Dorsolateral prefrontal cortex (tissue), 120 donors: ENCODE measurements at regions of chr1 and their contacts with region 1.

Region 1: GRCh38 chr1:2194898-2195673 is 514 bp upstream of the FAAP20 start:
- DNase-seq: peak; percentile 68 to 87 (median 79)
- H3K4me3 ChIP-seq: peak overlapping the region; percentile 52 to 83 (median 71)
- H3K27ac ChIP-seq: peak overlapping the region; percentile 55 to 99 (median 93)
- H3K27me3 ChIP-seq: no peaks in the 10 kb centered on the region
- CTCF ChIP-seq: peak; percentile 58 to 96 (median 87)

Region 2: GRCh38 chr1:2115681-2116341 is 79.3 kb before region 1 on chr1:
- intact Hi-C with region 1: no loop called
- DNase-seq: peak in 1 of 10 donors; percentile 58
- H3K4me3 ChIP-seq: peak overlapping the region in 40 of 59 donors; percentile 4 to 45 (median 25)
- H3K27ac ChIP-seq: peak overlapping the region in 1 of 59 donors; percentile 23
- H3K27me3 ChIP-seq: no peaks in the 10 kb centered on the region
- CTCF ChIP-seq: no peak

Region 3: DNA sequence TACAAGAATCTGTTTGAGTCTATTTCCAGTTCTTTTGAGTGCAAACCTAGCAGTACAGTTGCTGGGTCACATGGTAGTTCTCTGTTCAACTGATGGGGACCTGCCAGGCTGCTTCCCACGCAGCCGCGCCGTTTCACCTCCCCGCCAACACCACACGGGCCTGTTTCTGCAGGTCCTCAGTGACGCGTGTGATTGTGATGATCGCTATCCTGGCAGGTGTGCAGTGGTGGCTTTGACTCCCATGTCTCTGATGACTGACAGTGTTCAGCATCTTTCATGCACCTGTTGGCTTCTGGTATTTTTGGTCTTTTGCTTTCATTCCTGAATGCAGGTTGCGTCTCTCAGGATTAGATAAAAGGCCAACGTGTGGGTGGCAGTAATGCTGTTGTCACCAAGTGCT is 42.1 kb before region 1 on chr1:
- intact Hi-C with region 1: no loop called
- DNase-seq: peak in 5 of 10 donors; percentile 54 to 70 (median 65)
- H3K4me3 ChIP-seq: peak overlapping the region in 1 of 59 donors; percentile 6
- H3K27ac ChIP-seq: peak overlapping the region in 9 of 59 donors; percentile 25 to 75 (median 36)
- H3K27me3 ChIP-seq: no peaks in the 10 kb centered on the region
- CTCF ChIP-seq: no peak

Region 4: GRCh38 chr1:2233997-2234761 is 39.1 kb after region 1 on chr1:
- intact Hi-C with region 1: loop called in 1 of 2 experiments (anchors 5 kb)
- DNase-seq: peak in 6 of 10 donors; percentile 50 to 81 (median 66)
- H3K4me3 ChIP-seq: peak overlapping the region; percentile 2 to 86 (median 72)
- H3K27ac ChIP-seq: peak overlapping the region in 57 of 59 donors; percentile 2 to 96 (median 84)
- H3K27me3 ChIP-seq: no peaks in the 10 kb centered on the region
- CTCF ChIP-seq: no peak

Region 5: DNA sequence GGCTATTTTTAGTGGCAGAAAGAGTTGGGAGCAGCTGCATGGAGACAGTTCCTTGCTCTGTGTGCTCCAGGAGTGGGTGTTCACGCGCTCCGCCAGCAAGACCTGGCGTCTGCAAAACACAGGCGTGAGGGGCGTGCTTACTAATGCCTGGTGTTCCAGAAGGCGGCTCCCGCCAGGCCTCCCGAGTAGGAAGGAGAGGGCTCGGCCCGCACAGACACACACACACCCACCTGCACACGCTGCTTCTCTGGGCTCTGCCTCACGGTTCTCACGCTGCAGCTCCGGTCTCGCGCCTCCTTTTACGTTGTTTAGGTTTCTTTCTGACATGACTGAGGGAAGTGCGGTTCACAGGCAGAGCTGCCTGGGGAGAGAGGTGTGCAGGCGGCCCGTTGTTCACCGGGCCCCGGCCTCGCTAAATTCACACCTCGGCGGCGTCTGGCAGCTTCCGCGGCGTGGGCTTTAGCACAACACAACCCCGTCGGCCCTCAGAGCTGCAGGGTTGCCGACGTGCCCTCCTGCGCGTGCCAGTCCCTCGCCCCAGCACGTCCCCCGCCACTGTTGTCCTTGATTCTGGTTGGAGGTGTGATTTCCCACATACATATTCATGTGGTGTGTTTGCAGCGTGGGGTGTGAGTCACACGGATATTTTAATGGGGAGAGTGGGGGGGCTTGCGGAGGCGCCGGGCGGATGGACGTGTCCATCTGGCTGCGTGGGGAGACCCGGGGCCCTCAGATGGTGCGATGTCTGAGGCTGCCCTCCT is 110.0 kb after region 1 on chr1:
- intact Hi-C with region 1: loop called in 1 of 2 experiments (anchors 5 kb)
- DNase-seq: peak in 9 of 10 donors; percentile 53 to 87 (median 78)
- H3K4me3 ChIP-seq: peak overlapping the region in 1 of 59 donors; percentile 32
- H3K27ac ChIP-seq: peak overlapping the region in 57 of 59 donors; percentile 8 to 96 (median 71)
- H3K27me3 ChIP-seq: no peaks in the 10 kb centered on the region
- CTCF ChIP-seq: no peak

Region 6: GRCh38 chr1:2314803-2315673 is 120.0 kb after region 1 on chr1:
- intact Hi-C with region 1: loop called in 1 of 2 experiments (anchors 5 kb)
- DNase-seq: no peak
- H3K4me3 ChIP-seq: peak overlapping the region; percentile 41 to 75 (median 63)
- H3K27ac ChIP-seq: peak overlapping the region in 53 of 59 donors; percentile 1 to 96 (median 74)
- H3K27me3 ChIP-seq: no peaks in the 10 kb centered on the region
- CTCF ChIP-seq: peak; percentile 79 to 99 (median 92)

Region 7: DNA sequence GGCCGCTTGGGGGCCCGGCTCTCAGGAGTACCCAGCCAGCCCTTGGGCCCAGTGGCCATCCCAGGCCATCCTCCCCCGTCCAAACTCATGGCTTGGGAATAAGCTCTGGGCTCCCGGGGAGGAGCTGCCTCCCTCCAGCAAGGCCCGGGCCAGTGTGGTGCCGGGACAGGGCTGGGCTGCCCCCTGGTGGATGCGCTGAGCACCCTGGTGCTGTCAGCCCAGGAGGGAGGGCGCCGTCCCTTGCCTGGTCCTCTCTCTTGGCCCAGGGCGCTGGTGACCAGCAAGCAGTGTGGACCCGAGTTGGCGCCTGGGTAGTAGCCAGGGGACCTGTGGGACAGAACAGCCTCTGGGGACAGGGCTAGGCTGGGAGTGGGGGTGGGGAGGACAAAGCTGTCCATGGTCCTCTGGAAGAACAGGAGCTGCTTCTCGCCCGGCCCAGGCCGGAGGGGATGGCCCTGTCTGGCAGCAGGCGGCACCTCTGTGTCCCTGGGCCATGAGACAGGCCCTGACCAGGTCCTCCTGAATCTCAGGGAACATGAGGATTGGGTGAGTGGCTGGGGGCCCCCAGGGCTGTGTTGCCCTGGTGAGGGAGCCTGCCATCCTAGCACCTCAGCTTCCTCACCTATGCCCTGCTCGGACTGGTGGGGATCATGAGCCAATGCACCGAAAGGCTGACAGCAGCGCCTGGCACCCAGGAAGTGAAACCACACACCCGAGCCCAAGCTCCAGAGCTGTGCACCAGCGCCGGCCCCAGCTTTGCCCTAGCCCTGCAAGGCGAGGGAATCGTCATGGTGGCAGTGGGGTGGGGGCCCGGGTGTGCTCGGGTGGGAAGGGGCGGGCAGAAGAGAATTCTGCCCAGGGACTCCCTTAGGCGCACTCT is 186.9 kb after region 1 on chr1:
- intact Hi-C with region 1: loop called (anchors 1 kb)
- DNase-seq: peak; percentile 64 to 85 (median 72)
- H3K4me3 ChIP-seq: no peak overlapping the region
- H3K27ac ChIP-seq: peak overlapping the region in 33 of 59 donors; percentile 12 to 88 (median 39)
- H3K27me3 ChIP-seq: no peaks in the 10 kb centered on the region
- CTCF ChIP-seq: peak; percentile 54 to 94 (median 88)

Region 8: DNA sequence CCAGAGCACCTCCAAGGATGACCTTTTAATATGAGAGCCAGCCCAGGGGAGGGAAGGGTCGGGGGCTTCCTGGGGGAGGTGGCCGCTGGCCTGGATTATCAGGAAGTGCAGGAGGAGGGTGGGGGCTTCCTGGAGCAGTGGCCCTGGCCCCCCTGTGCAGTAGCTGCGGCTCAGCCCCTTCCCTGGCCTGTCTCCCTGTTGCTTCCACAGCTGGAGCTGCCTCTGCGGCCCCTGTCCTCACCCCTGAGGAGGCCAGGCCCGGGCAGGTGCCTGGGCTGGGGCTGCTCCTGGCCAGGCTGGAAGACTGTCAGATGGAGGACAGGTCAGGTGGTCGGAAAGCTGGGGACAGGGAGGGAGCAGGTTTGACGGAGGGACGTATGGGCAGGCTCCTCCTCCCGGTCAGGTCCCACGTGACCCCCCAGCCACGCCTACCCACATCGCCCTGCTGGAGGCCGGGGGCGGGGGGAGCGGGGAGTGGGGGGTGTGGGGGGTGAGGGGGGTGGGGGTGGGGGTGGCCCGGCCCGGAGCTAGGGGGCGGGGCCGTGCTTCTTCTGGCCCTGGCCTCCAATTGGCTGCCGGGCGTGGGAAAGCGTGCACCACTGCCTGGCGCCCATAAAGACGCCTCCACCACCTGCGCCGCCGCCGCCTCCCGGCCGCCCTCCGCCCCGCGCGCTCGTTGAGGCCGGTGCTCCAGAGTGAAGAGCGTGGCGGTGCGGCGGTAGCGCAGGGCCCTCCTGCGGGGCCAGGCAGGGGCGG is 350.9 kb after region 1 on chr1:
- intact Hi-C with region 1: loop called in 1 of 2 experiments (anchors 10 kb)
- DNase-seq: peak in 9 of 10 donors; percentile 39 to 86 (median 76)
- H3K4me3 ChIP-seq: peak overlapping the region; percentile 25 to 69 (median 56)
- H3K27ac ChIP-seq: peak overlapping the region in 56 of 59 donors; percentile 29 to 99 (median 96)
- H3K27me3 ChIP-seq: peaks cover 0 to 7% (median 0%) of the 10 kb centered on the region in 45 donors
- CTCF ChIP-seq: peak in 1 of 56 donors; percentile 3